H1 (cell line): ENCODE measurements at regions of chr6 and their contacts with region 1.

Region 1: DNA sequence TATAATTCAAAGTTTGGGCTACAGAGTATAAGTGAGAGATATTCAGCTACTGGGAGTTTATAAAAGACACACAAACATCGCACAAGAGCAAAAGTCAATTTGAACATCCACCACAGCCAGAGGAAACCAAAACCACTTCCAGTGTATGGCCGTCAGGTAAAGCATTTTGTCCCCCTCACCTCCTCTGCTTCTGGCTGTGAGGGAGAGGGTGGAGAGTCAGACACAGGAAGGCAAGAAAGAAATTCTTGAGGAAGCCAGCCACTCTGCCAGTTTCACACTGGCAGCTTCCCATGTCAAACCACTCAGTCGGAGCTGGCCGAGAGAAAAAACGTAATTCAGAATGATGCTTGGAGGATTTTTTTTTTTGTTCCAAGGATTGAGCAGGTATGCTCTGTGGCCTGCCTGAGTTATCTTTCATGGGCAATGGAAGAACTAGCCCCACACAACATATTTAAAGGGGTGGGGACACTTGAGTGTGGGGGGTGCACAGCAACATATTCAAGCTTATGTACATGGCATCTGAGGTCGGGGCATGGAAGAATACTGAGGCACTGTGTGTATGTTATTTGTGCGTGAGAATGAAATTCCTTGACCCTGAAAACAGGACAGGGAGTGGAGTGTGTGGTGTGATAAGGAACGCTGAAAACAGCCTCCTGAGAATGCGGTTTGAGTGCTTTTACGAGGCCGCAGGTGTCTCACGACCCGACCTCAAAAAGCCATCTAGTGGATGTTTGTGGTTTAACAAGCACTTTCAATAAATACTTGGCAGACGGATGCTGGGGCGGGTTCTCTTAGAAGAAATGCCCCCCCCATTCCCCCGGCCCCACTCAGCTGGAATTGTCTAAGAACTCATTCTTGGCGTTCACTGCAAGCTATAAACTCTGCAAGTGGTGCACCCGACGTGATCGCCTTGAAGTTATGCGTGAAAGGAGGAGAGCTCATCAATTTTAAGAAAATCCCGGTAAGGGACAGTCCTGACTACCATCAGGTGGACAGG is 27.5 kb upstream of the ZBTB22 start:
- DNase-seq: peak in 1 of 2 experiments; percentile 54
- H3K4me3 ChIP-seq: no peak overlapping the region
- H3K27ac ChIP-seq: no peak overlapping the region
- H3K4me1 ChIP-seq: peaks cover 0 to 5% (median 2%) of the 10 kb centered on the region in 4 experiments; a peak in 2 of 7 replicates
- H3K27me3 ChIP-seq: no peaks in the 10 kb centered on the region
- CTCF ChIP-seq: peak in 2 of 3 experiments; percentile 60 to 68; a peak in 3 of 4 replicates
- EP300 ChIP-seq: no peak
- POLR2A ChIP-seq: no peak
- RAD21 ChIP-seq: peak; percentile 44 to 60

Region 2: GRCh38 chr6:32529697-32530429 is 815.1 kb before region 1 on chr6 and contains the start of gene HLA-DRB5:
- CTCF ChIA-PET with region 1: no interaction called
- POLR2A ChIA-PET with region 1: no interaction called
- DNase-seq: no peak
- H3K4me3 ChIP-seq: no peak within 1 kb of the TSS
- H3K27ac ChIP-seq: no peak within 1 kb of the TSS
- H3K4me1 ChIP-seq: no peaks in the 10 kb centered on the region
- H3K27me3 ChIP-seq: no peaks in the 10 kb centered on the region
- CTCF ChIP-seq: no peak
- EP300 ChIP-seq: no peak
- POLR2A ChIP-seq: no peak
- RAD21 ChIP-seq: no peak
- total RNA-seq, gene HLA-DRB5: 1.0 and 1.4 TPM in 2 replicates

Region 3: DNA sequence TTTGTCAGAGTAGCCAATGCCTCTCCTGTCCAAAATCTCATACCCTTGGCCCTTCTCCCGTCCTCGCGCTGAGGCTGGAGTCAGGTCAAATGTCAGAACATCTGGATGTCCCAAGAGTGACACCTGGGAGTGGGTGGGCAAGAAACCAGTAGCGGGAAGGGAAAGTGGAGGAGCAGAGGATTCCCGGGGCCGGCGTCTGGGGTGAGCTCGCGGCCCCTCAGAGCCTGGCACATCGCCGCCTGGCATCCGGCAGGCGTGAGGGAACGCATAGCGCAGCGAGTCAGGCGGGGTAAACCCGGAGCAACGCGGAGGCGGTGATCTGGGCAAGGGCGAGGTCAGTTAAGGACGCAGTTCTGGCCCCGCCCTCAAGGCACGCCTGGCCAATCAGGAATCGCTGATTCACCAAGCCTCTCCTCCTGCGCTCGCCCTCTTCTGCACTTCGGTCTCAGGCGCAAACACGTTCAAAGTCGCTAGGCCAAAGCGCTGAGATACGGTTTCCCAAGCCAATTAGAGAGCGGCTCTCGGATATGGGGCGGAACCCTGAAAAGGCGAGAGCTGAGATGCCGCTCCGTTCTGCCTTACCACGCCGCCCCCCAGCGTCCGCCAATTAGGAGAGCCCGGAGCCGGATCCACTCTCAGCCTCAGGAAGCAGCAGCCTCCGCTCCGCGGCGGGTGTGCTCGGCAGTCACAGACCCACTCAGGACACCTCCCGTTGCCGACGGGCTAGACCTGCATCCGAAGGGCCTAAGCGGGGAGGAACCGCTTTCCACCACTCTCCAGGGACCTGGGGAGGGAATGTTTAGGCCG is 95.9 kb before region 1 on chr6:
- CTCF ChIA-PET with region 1: no interaction called
- POLR2A ChIA-PET with region 1: no interaction called
- DNase-seq: peak; percentile 95 to 97
- H3K4me3 ChIP-seq: peak overlapping the region; percentile 33 to 73 (median 70)
- H3K27ac ChIP-seq: peak overlapping the region; percentile 44; the same call in 1 of the 2 replicates
- H3K4me1 ChIP-seq: peaks cover 0 to 10% (median 7%) of the 10 kb centered on the region in 4 experiments; a peak in 4 of 7 replicates
- H3K27me3 ChIP-seq: peaks cover 0 to 21% (median 11%) of the 10 kb centered on the region in 4 experiments; a peak in 6 of 7 replicates
- CTCF ChIP-seq: no peak
- EP300 ChIP-seq: no peak
- POLR2A ChIP-seq: peak in 1 of 2 experiments; percentile 70; a peak in 2 of 3 replicates
- RAD21 ChIP-seq: peak; percentile 6 to 22; a peak in 1 of 4 replicates

Region 4: GRCh38 chr6:33317669-33318425 is 27.2 kb before region 1 on chr6 and contains the start of gene ZBTB22:
- CTCF ChIA-PET with region 1: interaction called, 12 read pairs
- POLR2A ChIA-PET with region 1: interaction called, 6 read pairs
- DNase-seq: peak; percentile 95 to 96
- H3K4me3 ChIP-seq: peak within 1 kb of the TSS; percentile 67 to 89 (median 78)
- H3K27ac ChIP-seq: peak within 1 kb of the TSS; percentile 83
- H3K4me1 ChIP-seq: peaks cover 0 to 34% (median 22%) of the 10 kb centered on the region in 4 experiments; a peak in 6 of 7 replicates
- H3K27me3 ChIP-seq: no peaks in the 10 kb centered on the region
- CTCF ChIP-seq: no peak
- EP300 ChIP-seq: no peak
- POLR2A ChIP-seq: peak in 1 of 2 experiments; percentile 70; a peak in 2 of 3 replicates
- RAD21 ChIP-seq: no peak
- total RNA-seq, gene ZBTB22: 9.8 and 9.9 TPM in 2 replicates

Region 5: GRCh38 chr6:33329058-33329457 is 15.9 kb before region 1 on chr6:
- CTCF ChIA-PET with region 1: interaction called, 22 read pairs
- POLR2A ChIA-PET with region 1: interaction called, 3 read pairs
- DNase-seq: no peak
- H3K4me3 ChIP-seq: no peak overlapping the region
- H3K27ac ChIP-seq: no peak overlapping the region
- H3K4me1 ChIP-seq: no peaks in the 10 kb centered on the region; a peak in 1 of 7 replicates
- H3K27me3 ChIP-seq: no peaks in the 10 kb centered on the region
- CTCF ChIP-seq: no peak
- EP300 ChIP-seq: no peak
- POLR2A ChIP-seq: no peak
- RAD21 ChIP-seq: no peak

Region 6: GRCh38 chr6:33359331-33359730 is 14.3 kb after region 1 on chr6:
- CTCF ChIA-PET with region 1: interaction called, 23 read pairs
- POLR2A ChIA-PET with region 1: no interaction called
- DNase-seq: no peak
- H3K4me3 ChIP-seq: no peak overlapping the region
- H3K27ac ChIP-seq: no peak overlapping the region
- H3K4me1 ChIP-seq: no peaks in the 10 kb centered on the region
- H3K27me3 ChIP-seq: no peaks in the 10 kb centered on the region
- CTCF ChIP-seq: no peak
- EP300 ChIP-seq: no peak
- POLR2A ChIP-seq: no peak
- RAD21 ChIP-seq: no peak

Region 7: GRCh38 chr6:33375143-33375671 is 30.2 kb after region 1 on chr6:
- CTCF ChIA-PET with region 1: interaction called, 11 read pairs
- POLR2A ChIA-PET with region 1: no interaction called
- DNase-seq: no peak
- H3K4me3 ChIP-seq: no peak overlapping the region
- H3K27ac ChIP-seq: no peak overlapping the region
- H3K4me1 ChIP-seq: peaks cover 1 to 11% (median 8%) of the 10 kb centered on the region in 4 experiments; a peak in 5 of 7 replicates
- H3K27me3 ChIP-seq: no peaks in the 10 kb centered on the region
- CTCF ChIP-seq: no peak
- EP300 ChIP-seq: no peak
- POLR2A ChIP-seq: no peak
- RAD21 ChIP-seq: no peak